ENCODE measurements at regions of chr10 and their contacts with region 1.

Region 1: DNA sequence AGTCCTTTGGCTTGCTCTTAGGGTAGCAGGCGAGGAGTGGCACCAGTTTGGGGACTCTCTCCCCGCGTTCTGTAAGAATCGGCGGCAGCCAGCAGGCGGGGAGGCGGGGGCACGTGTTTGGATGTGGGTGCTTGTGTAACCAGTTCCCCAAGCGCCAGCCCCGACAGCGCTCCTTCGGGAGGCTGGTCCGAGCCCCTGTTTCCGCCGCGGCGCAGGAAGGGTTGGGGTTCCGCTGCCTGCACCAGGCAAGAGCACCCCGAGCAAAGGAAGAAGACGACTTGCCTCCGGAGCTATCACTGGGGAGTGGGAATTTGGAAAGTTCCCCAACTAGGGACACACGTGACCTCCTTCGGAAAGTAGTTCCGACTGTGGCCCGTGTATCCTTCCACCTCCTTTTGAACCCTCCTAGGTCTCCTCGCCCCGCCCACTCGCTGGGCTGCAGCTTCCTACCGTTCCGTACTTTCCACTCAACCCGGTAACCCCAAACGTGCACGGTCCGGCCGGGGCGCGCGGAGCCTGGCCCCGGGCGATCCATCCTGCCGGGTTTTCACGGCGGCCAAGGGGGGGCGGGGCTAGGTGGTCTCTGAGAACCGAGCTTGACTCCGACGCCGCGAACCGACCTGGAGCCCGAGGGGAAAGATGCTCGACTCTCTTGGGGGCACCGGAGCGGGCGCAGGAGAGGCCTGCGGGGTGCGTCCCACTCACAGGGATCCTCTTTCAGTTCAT is 1.2 kb downstream of the KLLN start:
- DNase-seq: peak; percentile 86 to 98 (median 93)
- ATAC-seq: peak; percentile 66
- H3K4me3 ChIP-seq: peak overlapping the region; percentile 87 to 95
- H3K4me3 Mint-ChIP-seq: peak overlapping the region; percentile 99
- H3K27ac ChIP-seq: peak overlapping the region; percentile 69 to 85
- H3K27ac Mint-ChIP-seq: peak overlapping the region; percentile 95
- H3K4me1 ChIP-seq: peaks cover 18% of the 10 kb centered on the region
- H3K4me1 Mint-ChIP-seq: peaks cover 38% of the 10 kb centered on the region
- H3K27me3 ChIP-seq: no peaks in the 10 kb centered on the region
- H3K27me3 Mint-ChIP-seq: no peaks in the 10 kb centered on the region
- CTCF ChIP-seq: no peak

Region 2: DNA sequence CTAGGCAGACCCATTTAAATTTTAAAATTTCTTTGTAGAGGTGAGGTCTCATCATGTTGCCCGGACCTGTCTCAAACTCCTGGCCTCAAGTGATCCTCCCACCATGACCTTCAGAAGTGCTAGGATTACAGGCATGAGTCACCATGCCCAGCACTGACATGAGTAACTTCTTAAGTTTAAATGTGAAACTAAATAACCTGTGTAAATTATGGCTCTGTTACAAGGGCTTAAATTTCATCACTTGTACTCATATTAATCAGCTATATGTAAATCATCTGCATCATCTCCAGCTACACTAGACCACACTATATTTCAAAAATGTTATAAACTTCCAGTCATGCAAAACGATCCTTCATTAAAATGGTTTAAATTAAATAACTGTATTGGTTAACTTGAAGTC is 100.2 kb before region 1 on chr10:
- CTCF ChIA-PET with region 1: no interaction called
- POLR2A ChIA-PET with region 1: no interaction called
- intact Hi-C with region 1: no loop called
- DNase-seq: peak in 1 of 9 experiments; percentile 9
- ATAC-seq: no peak
- H3K4me3 ChIP-seq: no peak overlapping the region
- H3K4me3 Mint-ChIP-seq: no peak overlapping the region
- H3K27ac ChIP-seq: no peak overlapping the region
- H3K27ac Mint-ChIP-seq: no peak overlapping the region
- H3K4me1 ChIP-seq: no peaks in the 10 kb centered on the region
- H3K4me1 Mint-ChIP-seq: peaks cover 9% of the 10 kb centered on the region
- H3K27me3 ChIP-seq: no peaks in the 10 kb centered on the region
- H3K27me3 Mint-ChIP-seq: no peaks in the 10 kb centered on the region
- CTCF ChIP-seq: no peak

Region 3: DNA sequence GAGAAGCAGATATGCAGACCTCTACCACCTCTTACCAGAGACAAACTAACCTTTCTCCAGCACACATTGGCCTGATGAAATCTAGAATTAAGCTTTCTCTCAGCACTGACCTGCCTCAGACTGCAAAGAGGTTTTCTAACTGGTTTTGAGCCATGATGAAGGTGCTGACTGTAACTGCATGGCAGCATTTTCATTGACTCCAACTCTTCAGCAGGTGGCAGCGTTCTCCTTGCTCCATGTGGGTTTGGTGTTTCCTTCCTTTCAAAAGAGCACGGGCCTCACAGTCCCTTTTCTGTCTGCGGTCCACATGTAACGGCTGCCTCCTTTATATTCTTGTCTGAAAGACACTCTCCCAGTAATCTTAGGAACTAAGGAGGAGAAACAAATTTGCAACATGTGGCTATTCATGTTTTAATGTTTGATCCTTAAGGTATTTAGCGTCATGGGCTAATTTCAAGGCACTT is 11.3 kb before region 1 on chr10:
- CTCF ChIA-PET with region 1: interaction called, 13 read pairs
- POLR2A ChIA-PET with region 1: interaction called, 11 read pairs
- intact Hi-C with region 1: no loop called
- DNase-seq: peak; percentile 2 to 76 (median 51)
- ATAC-seq: peak; percentile 90
- H3K4me3 ChIP-seq: no peak overlapping the region
- H3K4me3 Mint-ChIP-seq: no peak overlapping the region
- H3K27ac ChIP-seq: no peak overlapping the region
- H3K27ac Mint-ChIP-seq: no peak overlapping the region
- H3K4me1 ChIP-seq: no peaks in the 10 kb centered on the region
- H3K4me1 Mint-ChIP-seq: peaks cover 19% of the 10 kb centered on the region
- H3K27me3 ChIP-seq: no peaks in the 10 kb centered on the region
- H3K27me3 Mint-ChIP-seq: no peaks in the 10 kb centered on the region
- CTCF ChIP-seq: peak; percentile 62

Region 4: DNA sequence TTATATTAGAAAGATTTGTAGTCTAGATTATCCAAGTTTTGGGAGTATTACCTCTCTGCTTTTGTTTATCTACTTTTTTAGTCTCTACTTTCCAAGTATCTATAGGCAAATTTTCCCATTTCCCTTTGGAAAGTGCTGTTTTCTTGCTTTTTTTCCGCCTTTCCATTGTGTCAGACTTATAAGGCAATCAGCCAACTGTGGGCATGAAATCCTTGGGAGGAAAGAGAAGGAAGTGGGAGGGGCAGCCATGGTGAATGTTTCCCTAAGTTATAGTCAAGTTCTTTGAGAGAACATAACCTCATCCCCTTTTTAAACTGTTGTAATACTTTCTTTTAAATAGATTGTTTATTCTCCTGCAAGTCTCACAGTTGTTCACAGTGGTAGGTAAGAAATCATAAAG is 53.9 kb after region 1 on chr10:
- CTCF ChIA-PET with region 1: no interaction called
- POLR2A ChIA-PET with region 1: interaction called, 5 read pairs
- intact Hi-C with region 1: loop called in 1 of 2 experiments (anchors 5 kb)
- DNase-seq: no peak
- ATAC-seq: no peak
- H3K4me3 ChIP-seq: no peak overlapping the region
- H3K4me3 Mint-ChIP-seq: no peak overlapping the region
- H3K27ac ChIP-seq: no peak overlapping the region
- H3K27ac Mint-ChIP-seq: no peak overlapping the region
- H3K4me1 ChIP-seq: peaks cover 33% of the 10 kb centered on the region
- H3K4me1 Mint-ChIP-seq: peaks cover 58% of the 10 kb centered on the region
- H3K27me3 ChIP-seq: no peaks in the 10 kb centered on the region
- H3K27me3 Mint-ChIP-seq: no peaks in the 10 kb centered on the region
- CTCF ChIP-seq: no peak

Region 5: GRCh38 chr10:88091490-88092105 is 229.5 kb after region 1 on chr10:
- CTCF ChIA-PET with region 1: interaction called, 15 read pairs
- POLR2A ChIA-PET with region 1: interaction called, 34 read pairs
- intact Hi-C with region 1: loop called (anchors 2 to 5 kb)
- DNase-seq: peak; percentile 46 to 91 (median 67)
- ATAC-seq: peak; percentile 93
- H3K4me3 ChIP-seq: no peak overlapping the region
- H3K4me3 Mint-ChIP-seq: peak overlapping the region; percentile 33
- H3K27ac ChIP-seq: peak overlapping the region; percentile 26 to 76
- H3K27ac Mint-ChIP-seq: peak overlapping the region; percentile 92
- H3K4me1 ChIP-seq: peaks cover 38% of the 10 kb centered on the region
- H3K4me1 Mint-ChIP-seq: peaks cover 43% of the 10 kb centered on the region
- H3K27me3 ChIP-seq: no peaks in the 10 kb centered on the region
- H3K27me3 Mint-ChIP-seq: no peaks in the 10 kb centered on the region
- CTCF ChIP-seq: no peak

Region 6: GRCh38 chr10:88270871-88271713 is 409.0 kb after region 1 on chr10:
- CTCF ChIA-PET with region 1: no interaction called
- POLR2A ChIA-PET with region 1: interaction called, 8 read pairs
- intact Hi-C with region 1: loop called in 1 of 2 experiments (anchors 10 kb)
- DNase-seq: peak in 7 of 9 experiments; percentile 14 to 72 (median 28)
- ATAC-seq: peak; percentile 72
- H3K4me3 ChIP-seq: no peak overlapping the region
- H3K4me3 Mint-ChIP-seq: peak overlapping the region; percentile 69
- H3K27ac ChIP-seq: peak overlapping the region in 1 of 2 experiments; percentile 47
- H3K27ac Mint-ChIP-seq: peak overlapping the region; percentile 88
- H3K4me1 ChIP-seq: peaks cover 26% of the 10 kb centered on the region
- H3K4me1 Mint-ChIP-seq: peaks cover 41% of the 10 kb centered on the region
- H3K27me3 ChIP-seq: no peaks in the 10 kb centered on the region
- H3K27me3 Mint-ChIP-seq: no peaks in the 10 kb centered on the region
- CTCF ChIP-seq: no peak

Region 7: GRCh38 chr10:88553116-88553752 is 691.1 kb after region 1 on chr10:
- CTCF ChIA-PET with region 1: interaction called, 9 read pairs
- POLR2A ChIA-PET with region 1: no interaction called
- intact Hi-C with region 1: loop called (anchors 1 kb)
- DNase-seq: peak in 6 of 9 experiments; percentile 7 to 71 (median 28)
- ATAC-seq: peak; percentile 82
- H3K4me3 ChIP-seq: no peak overlapping the region
- H3K4me3 Mint-ChIP-seq: no peak overlapping the region
- H3K27ac ChIP-seq: no peak overlapping the region
- H3K27ac Mint-ChIP-seq: no peak overlapping the region
- H3K4me1 ChIP-seq: no peaks in the 10 kb centered on the region
- H3K4me1 Mint-ChIP-seq: no peaks in the 10 kb centered on the region
- H3K27me3 ChIP-seq: no peaks in the 10 kb centered on the region
- H3K27me3 Mint-ChIP-seq: no peaks in the 10 kb centered on the region
- CTCF ChIP-seq: peak; percentile 77

Region 8: DNA sequence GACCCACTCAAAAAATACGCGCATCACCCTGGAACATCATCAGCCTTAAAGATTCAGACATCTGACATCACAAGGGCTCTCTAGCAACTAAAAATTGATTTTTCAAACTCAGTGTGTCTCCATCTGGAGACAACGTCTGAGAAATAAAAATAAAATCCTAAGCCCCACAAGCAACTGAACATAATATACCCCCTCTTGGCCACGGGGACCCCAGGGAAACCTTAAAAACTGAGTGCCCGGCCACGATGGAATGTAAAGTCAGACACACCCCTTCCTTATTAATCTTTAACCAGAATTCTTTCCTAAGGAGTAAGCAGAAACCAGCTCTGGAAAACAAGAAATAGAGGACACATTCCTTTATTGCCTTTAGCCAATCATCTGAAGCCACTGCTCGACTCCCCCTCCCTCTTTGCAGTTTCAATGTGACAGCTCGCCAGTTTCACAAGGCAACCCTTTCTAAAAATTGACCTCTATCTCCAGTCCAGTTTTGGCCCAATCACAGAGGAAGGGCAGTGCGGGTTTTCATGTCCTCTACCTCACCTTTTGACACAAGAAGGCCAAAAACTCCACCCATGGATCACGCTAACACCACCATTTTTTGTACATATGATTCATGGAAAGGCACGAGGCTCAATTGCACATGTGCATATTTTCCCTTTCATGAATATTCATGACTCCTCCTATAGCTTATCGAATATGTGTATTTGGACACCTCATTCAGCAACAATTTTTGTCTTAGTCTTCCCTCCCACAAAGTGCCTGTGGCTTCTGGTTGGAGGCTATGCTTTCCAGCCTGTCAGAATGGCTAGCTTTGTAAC is 1489.9 kb after region 1 on chr10:
- CTCF ChIA-PET with region 1: no interaction called
- POLR2A ChIA-PET with region 1: no interaction called
- intact Hi-C with region 1: no loop called
- DNase-seq: no peak
- ATAC-seq: no peak
- H3K4me3 ChIP-seq: no peak overlapping the region
- H3K4me3 Mint-ChIP-seq: no peak overlapping the region
- H3K27ac ChIP-seq: no peak overlapping the region
- H3K27ac Mint-ChIP-seq: no peak overlapping the region
- H3K4me1 ChIP-seq: no peaks in the 10 kb centered on the region
- H3K4me1 Mint-ChIP-seq: no peaks in the 10 kb centered on the region
- H3K27me3 ChIP-seq: no peaks in the 10 kb centered on the region
- H3K27me3 Mint-ChIP-seq: peaks cover 14% of the 10 kb centered on the region
- CTCF ChIP-seq: no peak